Activated CD4-positive, alpha-beta T cell treated with anti-CD3 and anti-CD28 coated beads, Interleukin-2, amount 10 ng/mL, durations not matched to agents 24 days and 14 days (primary cell): ENCODE measurements at regions of chr11 and their contacts with region 1.

Region 1: DNA sequence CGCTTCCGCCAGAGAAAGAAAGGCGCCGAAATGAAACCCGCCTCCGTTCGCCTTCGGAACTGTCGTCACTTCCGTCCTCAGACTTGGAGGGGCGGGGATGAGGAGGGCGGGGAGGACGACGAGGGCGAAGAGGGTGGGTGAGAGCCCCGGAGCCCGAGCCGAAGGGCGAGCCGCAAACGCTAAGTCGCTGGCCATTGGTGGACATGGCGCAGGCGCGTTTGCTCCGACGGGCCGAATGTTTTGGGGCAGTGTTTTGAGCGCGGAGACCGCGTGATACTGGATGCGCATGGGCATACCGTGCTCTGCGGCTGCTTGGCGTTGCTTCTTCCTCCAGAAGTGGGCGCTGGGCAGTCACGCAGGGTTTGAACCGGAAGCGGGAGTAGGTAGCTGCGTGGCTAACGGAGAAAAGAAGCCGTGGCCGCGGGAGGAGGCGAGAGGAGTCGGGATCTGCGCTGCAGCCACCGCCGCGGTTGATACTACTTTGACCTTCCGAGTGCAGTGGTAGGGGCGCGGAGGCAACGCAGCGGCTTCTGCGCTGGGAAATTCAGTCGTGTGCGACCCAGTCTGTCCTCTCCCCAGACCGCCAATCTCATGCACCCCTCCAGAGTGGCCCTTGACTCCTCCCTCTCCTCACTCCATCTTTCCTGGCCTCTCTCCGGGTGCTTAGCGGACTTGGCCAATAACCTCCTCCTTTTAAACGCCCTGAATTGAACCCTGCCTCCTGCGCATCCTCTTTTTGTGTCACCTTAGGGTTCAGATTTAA is at the start of gene ATM:
- DNase-seq: peak; percentile 99
- H3K4me3 Mint-ChIP-seq: no peak within 1 kb of the TSS
- H3K27ac Mint-ChIP-seq: no peak within 1 kb of the TSS
- H3K4me1 Mint-ChIP-seq: peaks cover 56% of the 10 kb centered on the region
- H3K27me3 Mint-ChIP-seq: no peaks in the 10 kb centered on the region
- total RNA-seq, gene ATM: 37.6 and 42.5 TPM in 2 replicates

Region 2: DNA sequence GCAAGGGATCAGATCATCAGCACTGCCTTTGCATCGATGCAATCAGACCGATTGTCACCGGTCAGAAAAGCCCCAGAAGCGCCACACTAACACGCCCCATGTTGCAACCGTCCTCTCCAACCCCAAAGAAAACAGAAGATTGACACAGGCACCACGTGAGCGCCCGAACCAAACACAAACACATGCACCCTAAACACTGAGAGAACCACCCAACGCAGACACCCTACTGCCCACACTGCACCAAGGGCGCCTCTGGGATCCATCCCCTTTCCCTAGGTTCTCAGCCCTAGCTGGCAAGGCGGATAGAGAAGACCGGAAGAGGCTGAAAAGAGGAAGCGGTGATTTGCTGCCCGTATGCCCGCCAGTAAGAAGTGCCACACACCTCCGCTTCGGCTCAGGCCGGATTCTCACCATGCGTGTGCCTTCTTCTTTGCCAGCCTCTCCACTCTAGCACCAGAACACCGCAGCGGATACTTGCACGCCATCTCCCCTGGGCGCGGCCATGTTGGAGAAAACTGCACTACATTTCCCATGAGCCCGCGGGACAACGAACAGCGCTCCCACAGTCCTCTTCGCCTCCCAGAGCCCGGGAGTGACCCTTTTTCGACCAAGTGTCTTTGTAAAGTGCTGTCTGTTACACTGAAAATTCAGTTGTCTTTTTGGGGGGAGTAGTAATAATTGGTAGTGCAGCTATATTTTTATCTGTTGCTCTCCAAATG is 657.5 kb before region 1 on chr11 and contains the start of gene ALKBH8:
- intact Hi-C with region 1: loop called (anchors 10 kb)
- DNase-seq: peak; percentile 93
- H3K4me3 Mint-ChIP-seq: peak within 1 kb of the TSS; percentile 93
- H3K27ac Mint-ChIP-seq: peak within 1 kb of the TSS; percentile 90
- H3K4me1 Mint-ChIP-seq: peaks cover 40% of the 10 kb centered on the region
- H3K27me3 Mint-ChIP-seq: no peaks in the 10 kb centered on the region
- total RNA-seq, gene ALKBH8: 13.3 and 15.0 TPM in 2 replicates

Region 3: GRCh38 chr11:108121274-108122155 is 101.4 kb before region 1 on chr11 and contains the start of gene ACAT1:
- intact Hi-C with region 1: loop called (anchors 1 kb)
- DNase-seq: peak; percentile 99
- H3K4me3 Mint-ChIP-seq: peak within 1 kb of the TSS; percentile 87
- H3K27ac Mint-ChIP-seq: peak within 1 kb of the TSS; percentile 84
- H3K4me1 Mint-ChIP-seq: peaks cover 33% of the 10 kb centered on the region
- H3K27me3 Mint-ChIP-seq: no peaks in the 10 kb centered on the region
- total RNA-seq, gene ACAT1: 65.0 and 65.9 TPM in 2 replicates

Region 4: DNA sequence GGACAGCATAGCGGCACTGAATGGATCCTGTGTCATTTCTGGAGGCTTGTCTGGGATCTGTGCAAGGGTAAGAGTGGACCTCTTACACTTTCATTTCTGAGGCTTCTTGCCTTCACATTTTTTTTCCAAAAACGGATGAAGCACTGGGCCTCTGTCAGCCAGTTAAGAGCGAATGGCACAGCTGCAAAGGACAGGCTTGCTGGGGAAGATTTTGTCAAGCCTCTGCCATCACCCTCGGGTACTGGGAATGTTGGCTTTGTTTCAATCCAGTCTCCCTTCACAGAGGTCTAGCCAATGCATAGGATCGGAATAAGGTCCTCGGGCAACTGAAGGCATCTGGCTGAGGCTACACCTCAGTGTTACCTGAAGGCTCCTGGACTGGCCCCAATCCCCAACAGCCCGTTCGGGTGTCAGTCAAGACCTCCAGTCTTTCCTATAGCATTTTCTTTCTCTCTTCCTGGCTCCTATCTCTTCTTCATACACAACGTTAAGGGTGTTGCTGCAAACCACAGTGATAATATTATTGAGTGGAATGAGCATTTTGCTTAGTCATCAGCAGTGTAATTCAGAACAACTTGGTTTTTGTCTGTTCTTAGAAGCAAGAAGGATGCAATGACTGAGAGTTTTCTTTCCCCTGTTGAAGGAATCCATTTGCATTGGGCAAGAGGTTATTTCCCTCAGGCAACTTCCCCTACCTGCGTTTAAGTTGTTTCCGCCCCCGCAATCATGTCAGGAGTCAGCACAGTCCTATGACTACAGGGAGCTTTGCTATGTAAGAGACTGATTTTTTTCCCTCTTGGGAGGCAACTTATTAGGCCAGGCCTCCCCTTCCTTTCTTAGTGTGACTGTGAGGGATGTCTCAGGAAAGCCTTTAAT is 23.2 kb before region 1 on chr11:
- intact Hi-C with region 1: loop called (anchors 1 kb)
- DNase-seq: peak; percentile 77
- H3K4me3 Mint-ChIP-seq: peak overlapping the region; percentile 16
- H3K27ac Mint-ChIP-seq: peak overlapping the region; percentile 79
- H3K4me1 Mint-ChIP-seq: peaks cover 35% of the 10 kb centered on the region
- H3K27me3 Mint-ChIP-seq: no peaks in the 10 kb centered on the region

Region 5: GRCh38 chr11:108497317-108498045 is 274.6 kb after region 1 on chr11:
- intact Hi-C with region 1: loop called (anchors 2 kb)
- DNase-seq: peak; percentile 91
- H3K4me3 Mint-ChIP-seq: peak overlapping the region; percentile 89
- H3K27ac Mint-ChIP-seq: peak overlapping the region; percentile 97
- H3K4me1 Mint-ChIP-seq: peaks cover 22% of the 10 kb centered on the region
- H3K27me3 Mint-ChIP-seq: no peaks in the 10 kb centered on the region

Region 6: GRCh38 chr11:108647701-108648527 is 425.0 kb after region 1 on chr11:
- intact Hi-C with region 1: loop called (anchors 2 kb)
- DNase-seq: peak; percentile 89
- H3K4me3 Mint-ChIP-seq: no peak overlapping the region
- H3K27ac Mint-ChIP-seq: no peak overlapping the region
- H3K4me1 Mint-ChIP-seq: no peaks in the 10 kb centered on the region
- H3K27me3 Mint-ChIP-seq: peaks cover 12% of the 10 kb centered on the region

Region 7: DNA sequence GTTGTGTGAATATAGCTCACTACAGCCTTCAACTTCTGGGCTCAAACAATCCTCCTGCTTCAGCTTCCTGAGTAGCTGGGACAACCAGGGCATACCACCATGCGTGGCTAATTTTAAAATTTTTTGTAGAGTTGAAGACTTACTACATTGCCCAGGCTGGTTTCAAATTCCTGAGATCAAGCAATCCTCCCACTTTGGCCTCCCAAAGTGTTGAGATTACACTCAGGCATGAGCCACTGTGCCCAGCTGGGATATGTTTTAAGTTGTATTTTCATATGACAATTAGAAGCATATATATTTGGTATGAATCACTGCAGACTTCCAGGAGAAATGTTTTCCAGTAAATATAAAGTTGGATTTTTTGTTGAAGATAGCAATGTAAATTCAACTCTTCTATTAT is 457.4 kb after region 1 on chr11:
- intact Hi-C with region 1: no loop called
- DNase-seq: no peak
- H3K4me3 Mint-ChIP-seq: no peak overlapping the region
- H3K27ac Mint-ChIP-seq: no peak overlapping the region
- H3K4me1 Mint-ChIP-seq: peaks cover 4% of the 10 kb centered on the region
- H3K27me3 Mint-ChIP-seq: no peaks in the 10 kb centered on the region